ENCODE measurements at regions of chr2 and their contacts with region 1.

Region 1: GRCh38 chr2:168210895-168211570 is 36.4 kb downstream of the STK39 start:
- DNase-seq: no peak
- ATAC-seq: peak; percentile 65
- H3K4me3 Mint-ChIP-seq: peak overlapping the region; percentile 60
- H3K27ac Mint-ChIP-seq: peak overlapping the region; percentile 87
- H3K4me1 Mint-ChIP-seq: peaks cover 55% of the 10 kb centered on the region
- H3K27me3 Mint-ChIP-seq: no peaks in the 10 kb centered on the region
- CTCF ChIP-seq: no peak

Region 2: GRCh38 chr2:168194784-168195522 is 16.1 kb before region 1 on chr2:
- CTCF ChIA-PET with region 1: interaction called, 5 read pairs
- POLR2A ChIA-PET with region 1: interaction called, 27 read pairs
- intact Hi-C with region 1: loop called (anchors 1 kb)
- DNase-seq: peak; percentile 33
- ATAC-seq: peak; percentile 84
- H3K4me3 Mint-ChIP-seq: peak overlapping the region; percentile 79
- H3K27ac Mint-ChIP-seq: peak overlapping the region; percentile 97
- H3K4me1 Mint-ChIP-seq: peaks cover 53% of the 10 kb centered on the region
- H3K27me3 Mint-ChIP-seq: no peaks in the 10 kb centered on the region
- CTCF ChIP-seq: no peak

Measured in activated B cell treated with CpG ODN at 0.5 μM for 24 hours (primary cell).